Endothelial cell of umbilical vein (primary cell): ENCODE measurements at regions of chr1 and their contacts with region 1.

Region 1: GRCh38 chr1:42456010-42456758 is at the starts of genes PPCS and ZMYND12:
- DNase-seq: peak; percentile 88
- H3K4me3 ChIP-seq: peak within 1 kb of the TSS; percentile 29 to 62 (median 59)
- H3K27ac ChIP-seq: peak within 1 kb of the TSS; percentile 46
- H3K4me1 ChIP-seq: peaks cover 5% of the 10 kb centered on the region
- H3K27me3 ChIP-seq: no peaks in the 10 kb centered on the region
- CTCF ChIP-seq: no peak
- POLR2A ChIP-seq: peak; percentile 89
- total RNA-seq, gene PPCS: 29.9 and 32.6 TPM in 2 replicates
- total RNA-seq, gene ZMYND12: 0.33 TPM in 1 of 2 replicates, not detected in the other

Region 2: DNA sequence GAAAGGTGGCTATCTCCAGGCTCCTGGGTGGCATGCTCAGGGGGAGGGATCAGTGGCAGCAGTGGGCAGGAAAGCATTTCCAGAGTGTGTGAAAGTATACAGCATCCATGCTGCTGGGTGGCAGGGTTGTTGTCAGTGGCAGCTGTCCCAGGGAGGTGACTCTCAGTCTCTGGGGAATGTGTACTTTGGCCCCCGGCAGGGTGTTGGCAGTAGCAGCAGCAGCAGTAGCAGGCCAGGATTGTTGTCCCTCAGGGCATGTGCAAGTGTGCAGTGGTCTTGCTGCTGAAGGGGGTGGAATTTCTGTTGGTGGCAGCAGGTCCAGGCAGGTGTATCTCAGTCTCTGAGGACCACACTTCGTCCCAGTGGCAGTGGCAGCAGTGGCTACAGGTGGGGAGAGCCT is 374.7 kb before region 1 on chr1:
- CTCF ChIA-PET with region 1: no interaction called
- POLR2A ChIA-PET with region 1: no interaction called
- dilution Hi-C with region 1: no loop called
- intact Hi-C with region 1: no loop called
- DNase-seq: no peak
- H3K4me3 ChIP-seq: no peak overlapping the region
- H3K27ac ChIP-seq: no peak overlapping the region
- H3K4me1 ChIP-seq: no peaks in the 10 kb centered on the region
- H3K27me3 ChIP-seq: peaks cover 9 to 27% of the 10 kb centered on the region in 2 experiments
- CTCF ChIP-seq: no peak
- POLR2A ChIP-seq: no peak

Region 3: DNA sequence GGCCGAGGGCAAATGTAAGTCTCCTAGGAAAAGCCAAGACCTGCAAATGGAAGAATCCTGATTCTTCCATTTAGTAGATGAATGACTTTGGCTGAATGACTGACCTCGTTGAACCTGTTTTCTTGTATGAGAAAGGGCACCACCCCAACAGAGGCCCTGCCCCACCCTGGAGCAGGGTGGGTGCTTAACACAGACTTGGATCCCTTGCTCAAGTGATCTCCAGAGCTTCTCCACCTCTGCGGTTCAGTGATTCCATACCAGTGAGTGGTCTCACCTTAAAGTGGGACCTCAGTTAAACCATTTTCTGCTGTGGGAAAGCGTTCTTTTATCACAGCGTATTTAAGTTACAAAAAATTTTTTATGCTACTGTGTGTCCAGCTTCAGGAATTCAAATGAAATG is 341.9 kb before region 1 on chr1:
- CTCF ChIA-PET with region 1: no interaction called
- POLR2A ChIA-PET with region 1: no interaction called
- dilution Hi-C with region 1: no loop called
- intact Hi-C with region 1: no loop called
- DNase-seq: no peak
- H3K4me3 ChIP-seq: no peak overlapping the region
- H3K27ac ChIP-seq: no peak overlapping the region
- H3K4me1 ChIP-seq: no peaks in the 10 kb centered on the region
- H3K27me3 ChIP-seq: peaks cover 6 to 17% of the 10 kb centered on the region in 2 experiments
- CTCF ChIP-seq: no peak
- POLR2A ChIP-seq: no peak

Region 4: DNA sequence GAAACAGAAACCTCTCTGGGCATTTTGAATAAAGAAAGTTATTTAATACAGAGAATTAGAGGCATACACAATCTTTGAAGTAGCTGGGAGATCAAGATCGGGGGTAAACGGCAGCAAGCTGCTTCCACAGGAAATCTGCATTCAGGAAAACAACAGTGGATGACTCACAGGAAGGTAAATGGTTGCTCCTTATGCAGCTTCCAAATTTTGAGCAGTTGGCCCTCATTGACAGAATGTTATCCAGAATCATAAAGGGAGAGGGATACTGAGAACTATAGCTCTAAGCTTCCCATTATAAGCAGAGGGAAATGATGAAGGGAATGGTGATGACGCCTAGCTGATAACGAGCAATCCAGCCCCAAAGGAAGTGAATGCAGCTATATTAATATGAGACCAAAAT is 28.9 kb before region 1 on chr1:
- CTCF ChIA-PET with region 1: interaction called, 4 read pairs
- POLR2A ChIA-PET with region 1: no interaction called
- dilution Hi-C with region 1: no loop called
- intact Hi-C with region 1: loop called (anchors 2 kb)
- DNase-seq: peak; percentile 80
- H3K4me3 ChIP-seq: no peak overlapping the region
- H3K27ac ChIP-seq: peak overlapping the region; percentile 57
- H3K4me1 ChIP-seq: peaks cover 12% of the 10 kb centered on the region
- H3K27me3 ChIP-seq: no peaks in the 10 kb centered on the region
- CTCF ChIP-seq: no peak
- POLR2A ChIP-seq: no peak

Region 5: DNA sequence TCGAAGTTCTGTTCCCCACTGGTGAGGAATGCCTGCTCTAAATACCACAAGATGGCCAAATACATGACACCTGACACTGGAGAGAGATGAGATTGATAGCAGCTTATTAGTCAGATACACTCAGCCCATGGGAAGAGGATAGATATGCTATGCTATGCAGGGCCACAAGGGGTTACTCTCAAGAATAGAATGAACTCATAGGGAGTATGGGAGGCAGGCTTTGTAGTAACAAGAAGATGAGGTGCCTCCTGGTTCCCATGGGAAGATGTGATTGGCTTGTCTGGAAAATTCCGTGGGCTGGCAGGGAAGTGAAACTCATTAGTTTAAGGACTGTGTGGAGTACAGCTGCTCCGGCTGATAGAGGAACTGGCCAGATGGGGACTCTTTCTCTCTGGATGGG is 23.4 kb after region 1 on chr1:
- CTCF ChIA-PET with region 1: no interaction called
- POLR2A ChIA-PET with region 1: no interaction called
- dilution Hi-C with region 1: no loop called
- intact Hi-C with region 1: no loop called
- DNase-seq: no peak
- H3K4me3 ChIP-seq: no peak overlapping the region
- H3K27ac ChIP-seq: no peak overlapping the region
- H3K4me1 ChIP-seq: no peaks in the 10 kb centered on the region
- H3K27me3 ChIP-seq: peaks cover 0 to 2% of the 10 kb centered on the region in 2 experiments
- CTCF ChIP-seq: peak in 1 of 2 donors; percentile 8
- POLR2A ChIP-seq: no peak

Region 6: DNA sequence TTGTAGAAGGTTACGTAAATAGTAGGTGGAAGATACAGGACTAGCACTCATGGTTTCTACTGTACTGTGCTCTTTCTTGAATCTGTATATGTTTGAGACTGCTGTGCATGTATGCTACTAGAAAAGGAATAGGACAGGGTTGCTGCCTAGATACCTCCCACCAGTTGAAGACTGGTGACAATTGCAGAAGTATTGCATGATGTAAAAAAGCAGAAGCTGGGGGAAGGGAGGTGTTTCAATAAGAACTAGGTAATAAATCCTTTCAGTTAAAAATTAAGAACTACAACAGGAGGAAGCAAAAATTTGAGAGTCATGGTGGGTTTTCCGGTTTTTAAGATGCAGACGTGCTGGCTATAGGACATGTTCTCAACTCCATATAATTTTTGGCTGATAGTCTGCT is 95.0 kb after region 1 on chr1:
- CTCF ChIA-PET with region 1: no interaction called
- POLR2A ChIA-PET with region 1: no interaction called
- dilution Hi-C with region 1: no loop called
- intact Hi-C with region 1: no loop called
- DNase-seq: no peak
- H3K4me3 ChIP-seq: no peak overlapping the region
- H3K27ac ChIP-seq: no peak overlapping the region
- H3K4me1 ChIP-seq: no peaks in the 10 kb centered on the region
- H3K27me3 ChIP-seq: peaks cover 4 to 11% of the 10 kb centered on the region in 2 experiments
- CTCF ChIP-seq: no peak
- POLR2A ChIP-seq: no peak